ENCODE measurements at regions of chr2 and their contacts with region 1.

Region 1: DNA sequence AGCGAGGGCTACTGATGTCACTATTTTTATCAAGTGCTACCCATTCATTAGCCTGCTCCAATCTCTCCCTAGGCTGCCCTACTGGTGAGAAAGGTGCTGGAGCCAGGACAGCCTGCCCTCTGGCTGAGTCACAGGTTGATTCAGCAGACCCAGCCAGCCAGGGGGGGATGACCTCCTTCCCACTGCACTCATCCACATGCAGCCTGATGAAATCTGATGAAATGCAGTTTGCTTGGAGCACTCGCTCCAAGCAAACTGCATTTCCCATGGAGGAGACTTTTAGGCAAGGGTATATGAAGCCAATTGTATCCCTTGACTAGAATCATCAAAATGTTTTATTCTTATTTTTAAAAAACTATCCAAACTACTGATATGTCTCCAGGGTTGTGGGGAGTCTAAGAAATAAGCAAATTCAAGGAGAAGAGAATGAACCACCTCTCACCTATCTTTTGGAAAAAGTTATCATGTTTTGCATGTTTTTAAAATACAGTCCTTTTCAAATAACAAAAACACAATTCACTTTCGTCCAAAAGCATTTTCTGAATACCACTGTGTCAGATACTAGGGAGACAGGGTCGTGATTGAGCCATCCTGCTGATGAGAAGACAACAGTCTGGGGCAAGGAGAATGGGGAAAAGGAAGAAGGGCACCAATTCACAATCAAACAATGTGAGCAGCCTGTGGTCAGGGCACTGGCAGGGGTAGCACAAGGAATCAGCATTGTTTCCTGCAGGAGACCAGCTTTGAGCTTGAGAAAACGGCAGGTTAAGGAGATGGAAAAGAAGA is 128.3 kb downstream of the AFF3 start:
- DNase-seq: peak; percentile 80
- ATAC-seq: peak; percentile 99
- H3K4me3 ChIP-seq: no peak overlapping the region
- H3K27ac ChIP-seq: peak overlapping the region; percentile 1; the same call in 1 of the 2 replicates
- H3K4me1 ChIP-seq: peaks cover 28% of the 10 kb centered on the region
- H3K27me3 ChIP-seq: no peaks in the 10 kb centered on the region
- CTCF ChIP-seq: no peak

Region 2: DNA sequence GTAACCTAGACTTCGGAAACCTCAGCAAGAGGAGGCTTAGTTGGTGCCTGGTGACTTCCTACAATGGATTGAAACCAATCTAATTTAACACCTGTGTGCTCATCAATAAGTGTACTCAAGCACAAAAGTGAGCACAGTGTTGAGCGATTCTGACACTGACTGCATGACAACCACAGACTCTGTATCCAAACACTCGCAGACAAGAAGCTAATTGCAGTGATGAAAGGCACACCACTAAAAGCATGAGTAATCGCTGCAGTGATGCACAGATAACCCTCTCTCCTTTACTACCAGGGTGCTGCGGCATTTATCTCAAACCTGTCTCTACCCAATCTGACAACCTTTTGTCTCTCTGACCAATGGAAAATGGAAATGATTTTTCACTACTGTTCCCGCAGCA is 39.8 kb before region 1 on chr2:
- CTCF ChIA-PET with region 1: no interaction called
- POLR2A ChIA-PET with region 1: no interaction called
- intact Hi-C with region 1: loop called (anchors 1 kb)
- DNase-seq: peak; percentile 52
- ATAC-seq: peak; percentile 27
- H3K4me3 ChIP-seq: peak overlapping the region; percentile 34; the same call in 1 of the 2 replicates
- H3K27ac ChIP-seq: peak overlapping the region; percentile 89
- H3K4me1 ChIP-seq: peaks cover 55% of the 10 kb centered on the region
- H3K27me3 ChIP-seq: no peaks in the 10 kb centered on the region
- CTCF ChIP-seq: no peak

Region 3: DNA sequence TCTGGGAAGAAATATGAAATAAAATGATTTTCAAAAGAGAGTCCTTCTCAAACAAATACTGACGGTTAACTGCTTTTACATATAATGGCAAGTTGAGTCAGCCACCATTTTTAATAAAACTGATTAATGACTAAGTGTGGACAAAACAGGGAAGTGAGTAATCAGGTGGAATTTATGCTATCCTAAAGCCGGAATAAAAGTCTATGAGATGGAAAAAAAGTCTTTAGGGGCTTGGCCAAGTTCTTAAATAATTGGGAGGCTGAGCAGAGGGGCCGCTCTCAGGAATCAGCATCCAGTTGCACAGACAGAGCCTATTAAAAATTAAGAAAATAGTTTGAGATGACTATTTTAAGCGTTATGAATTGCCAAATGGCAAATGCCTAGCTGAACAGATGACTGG is 186.9 kb after region 1 on chr2:
- CTCF ChIA-PET with region 1: no interaction called
- POLR2A ChIA-PET with region 1: no interaction called
- intact Hi-C with region 1: no loop called
- DNase-seq: peak; percentile 69
- ATAC-seq: peak; percentile 63
- H3K4me3 ChIP-seq: no peak overlapping the region
- H3K27ac ChIP-seq: peak overlapping the region; percentile 42
- H3K4me1 ChIP-seq: peaks cover 32% of the 10 kb centered on the region
- H3K27me3 ChIP-seq: no peaks in the 10 kb centered on the region
- CTCF ChIP-seq: no peak

Region 4: GRCh38 chr2:100470898-100471514 is 456.9 kb after region 1 on chr2:
- CTCF ChIA-PET with region 1: no interaction called
- POLR2A ChIA-PET with region 1: no interaction called
- intact Hi-C with region 1: no loop called
- DNase-seq: no peak
- ATAC-seq: no peak
- H3K4me3 ChIP-seq: no peak overlapping the region
- H3K27ac ChIP-seq: no peak overlapping the region
- H3K4me1 ChIP-seq: no peaks in the 10 kb centered on the region
- H3K27me3 ChIP-seq: peaks cover 46% of the 10 kb centered on the region
- CTCF ChIP-seq: no peak